Dorsolateral prefrontal cortex (tissue), 120 donors: ENCODE measurements at regions of chrX and their contacts with region 1.

Region 1: DNA sequence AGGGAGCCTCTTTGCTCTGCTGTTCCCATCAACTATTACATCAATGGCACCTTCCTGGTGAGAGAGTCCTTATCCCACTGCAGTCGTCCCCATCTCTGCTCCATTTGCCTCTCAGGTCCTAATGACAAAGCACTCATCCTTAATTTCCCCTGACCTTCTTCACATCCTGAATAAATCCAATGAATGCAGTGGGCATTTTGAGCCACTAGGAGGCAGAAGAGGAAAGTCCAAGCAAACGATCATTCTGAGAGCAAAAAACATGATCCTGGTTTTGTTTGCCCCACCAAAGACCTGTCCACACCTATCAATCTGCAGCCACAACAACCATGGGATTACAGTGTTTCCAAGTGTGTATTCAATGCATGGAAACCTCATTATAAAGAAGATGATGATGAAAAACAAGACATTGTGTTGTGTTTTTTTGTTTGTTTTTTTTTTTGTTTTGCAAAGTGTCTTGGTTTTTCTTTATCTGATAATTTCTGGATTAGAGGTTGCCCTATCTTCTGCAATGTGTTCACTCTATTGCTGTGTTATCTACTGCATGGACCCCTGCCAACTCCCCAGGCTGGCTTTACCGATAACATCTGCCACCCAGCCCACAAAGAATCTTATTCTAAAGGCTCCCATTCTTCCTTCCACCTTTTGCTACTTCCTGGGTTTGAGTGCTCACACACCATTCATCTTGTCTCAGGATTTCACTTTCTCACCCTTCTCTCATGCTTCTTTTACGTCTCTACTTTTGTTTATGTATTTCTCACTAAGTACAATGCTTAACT is 207.2 kb downstream of the NLGN4X start:
- DNase-seq: peak in 4 of 10 donors; percentile 20 to 56 (median 41)
- H3K4me3 ChIP-seq: no peak overlapping the region
- H3K27ac ChIP-seq: no peak overlapping the region
- H3K27me3 ChIP-seq: peaks cover 0 to 25% (median 0%) of the 10 kb centered on the region in 45 donors
- CTCF ChIP-seq: peak; percentile 29 to 77 (median 67)

Region 2: DNA sequence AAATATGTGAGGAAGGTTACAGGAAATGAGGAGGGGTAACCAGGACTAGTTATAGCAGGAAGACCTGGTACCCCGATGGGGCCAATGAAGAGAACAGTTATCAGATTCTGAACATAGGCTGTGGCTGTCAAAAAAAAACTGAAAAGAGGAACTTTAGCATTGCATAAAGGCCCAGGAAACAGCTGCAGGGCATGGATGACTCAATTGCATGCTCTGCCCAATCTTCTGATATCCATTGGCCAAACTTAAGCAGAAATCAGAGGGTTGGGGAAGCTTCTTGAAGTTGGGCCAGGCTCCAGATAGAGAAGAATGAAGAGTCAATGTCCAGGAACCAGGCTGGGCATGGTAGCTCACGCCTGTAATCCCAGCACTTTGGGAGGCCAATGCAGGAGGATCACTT is 1085.7 kb before region 1 on chrX:
- intact Hi-C with region 1: no loop called
- DNase-seq: no peak
- H3K4me3 ChIP-seq: no peak overlapping the region
- H3K27ac ChIP-seq: peak overlapping the region in 2 of 59 donors; percentile 41 to 43
- H3K27me3 ChIP-seq: peaks cover 0 to 14% (median 0%) of the 10 kb centered on the region in 45 donors
- CTCF ChIP-seq: no peak

Region 3: GRCh38 chrX:6225911-6226595 is 204.5 kb after region 1 on chrX:
- intact Hi-C with region 1: loop called (anchors 5 to 10 kb)
- DNase-seq: peak in 6 of 10 donors; percentile 16 to 47 (median 33)
- H3K4me3 ChIP-seq: peak overlapping the region; percentile 26 to 80 (median 64)
- H3K27ac ChIP-seq: peak overlapping the region in 46 of 59 donors; percentile 9 to 84 (median 57)
- H3K27me3 ChIP-seq: peaks cover 0 to 55% (median 19%) of the 10 kb centered on the region in 45 donors
- CTCF ChIP-seq: peak in 26 of 56 donors; percentile 12 to 44 (median 22)